Activated CD4-positive, alpha-beta T cell treated with anti-CD3 and anti-CD28 coated beads for 36 hours (primary cell): ENCODE measurements at regions of chr14 and their contacts with region 1.

Region 1: GRCh38 chr14:35883677-35884293 is 57.6 kb downstream of the BRMS1L start:
- DNase-seq: peak; percentile 56
- ATAC-seq: no peak
- H3K4me3 Mint-ChIP-seq: no peak overlapping the region
- H3K27ac Mint-ChIP-seq: no peak overlapping the region
- H3K4me1 Mint-ChIP-seq: no peaks in the 10 kb centered on the region
- H3K27me3 Mint-ChIP-seq: no peaks in the 10 kb centered on the region

Region 2: DNA sequence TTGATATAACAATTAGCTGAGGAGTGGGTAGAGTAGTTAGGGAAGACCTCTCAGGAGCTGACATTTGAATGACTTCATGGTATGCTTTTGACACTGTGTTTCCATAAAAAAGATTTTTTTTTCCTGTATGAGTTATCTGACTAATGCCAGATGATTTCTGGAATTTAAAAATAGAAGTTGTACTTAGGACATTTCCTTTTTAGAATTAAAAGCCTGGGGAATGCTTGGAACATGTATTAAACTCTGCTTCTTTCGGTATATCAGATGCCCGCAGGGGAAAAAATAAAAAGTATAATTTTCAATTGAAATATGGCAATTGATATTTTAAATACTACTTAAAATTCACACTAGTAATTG is 16.5 kb before region 1 on chr14:
- CTCF ChIA-PET with region 1: interaction called, 11 read pairs
- POLR2A ChIA-PET with region 1: no interaction called
- intact Hi-C with region 1: no loop called
- DNase-seq: no peak
- ATAC-seq: no peak
- H3K4me3 Mint-ChIP-seq: no peak overlapping the region
- H3K27ac Mint-ChIP-seq: no peak overlapping the region
- H3K4me1 Mint-ChIP-seq: no peaks in the 10 kb centered on the region
- H3K27me3 Mint-ChIP-seq: no peaks in the 10 kb centered on the region

Region 3: GRCh38 chr14:35944847-35945246 is 61.1 kb after region 1 on chr14:
- CTCF ChIA-PET with region 1: interaction called, 4 read pairs
- POLR2A ChIA-PET with region 1: no interaction called
- intact Hi-C with region 1: loop called in 1 of 2 experiments (anchors 2 kb)
- DNase-seq: peak; percentile 59
- ATAC-seq: peak; percentile 49
- H3K4me3 Mint-ChIP-seq: no peak overlapping the region
- H3K27ac Mint-ChIP-seq: no peak overlapping the region
- H3K4me1 Mint-ChIP-seq: peaks cover 2% of the 10 kb centered on the region
- H3K27me3 Mint-ChIP-seq: no peaks in the 10 kb centered on the region

Region 4: DNA sequence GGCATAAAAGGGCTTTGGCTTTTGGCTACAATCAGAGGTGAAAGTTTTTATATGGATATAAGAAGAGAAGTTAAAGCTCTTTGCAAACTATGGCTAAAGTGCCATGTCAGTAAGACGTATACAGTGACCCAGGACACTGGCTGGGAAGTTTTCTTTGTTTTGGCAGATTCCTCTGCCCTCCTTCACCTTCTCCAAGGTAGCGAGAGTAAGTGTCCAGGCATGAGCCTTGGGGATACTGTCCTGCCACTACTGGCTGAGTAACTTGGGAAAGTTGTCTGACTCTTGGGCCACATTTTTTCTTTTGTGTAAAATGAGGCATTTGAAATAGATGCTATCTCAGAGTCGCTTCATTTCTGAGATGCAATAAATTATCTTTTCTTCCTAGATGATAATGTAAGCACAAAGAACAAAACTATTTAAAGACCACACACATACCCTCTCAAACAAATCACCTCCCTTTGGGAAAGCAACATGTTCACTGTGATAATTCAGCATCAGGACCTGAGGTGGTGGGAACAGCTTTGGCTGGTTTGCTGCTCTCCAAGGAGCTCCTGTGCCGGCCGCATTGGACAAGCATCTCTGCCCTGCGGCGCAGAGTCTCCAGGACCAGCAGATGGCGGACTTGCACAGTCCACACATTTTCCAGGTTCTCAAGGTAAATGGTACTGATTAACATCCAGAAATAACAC is 186.4 kb after region 1 on chr14:
- CTCF ChIA-PET with region 1: interaction called, 41 read pairs
- POLR2A ChIA-PET with region 1: no interaction called
- intact Hi-C with region 1: loop called (anchors 1 kb)
- DNase-seq: peak; percentile 75
- ATAC-seq: peak; percentile 74
- H3K4me3 Mint-ChIP-seq: no peak overlapping the region
- H3K27ac Mint-ChIP-seq: no peak overlapping the region
- H3K4me1 Mint-ChIP-seq: no peaks in the 10 kb centered on the region
- H3K27me3 Mint-ChIP-seq: peaks cover 19% of the 10 kb centered on the region

Region 5: DNA sequence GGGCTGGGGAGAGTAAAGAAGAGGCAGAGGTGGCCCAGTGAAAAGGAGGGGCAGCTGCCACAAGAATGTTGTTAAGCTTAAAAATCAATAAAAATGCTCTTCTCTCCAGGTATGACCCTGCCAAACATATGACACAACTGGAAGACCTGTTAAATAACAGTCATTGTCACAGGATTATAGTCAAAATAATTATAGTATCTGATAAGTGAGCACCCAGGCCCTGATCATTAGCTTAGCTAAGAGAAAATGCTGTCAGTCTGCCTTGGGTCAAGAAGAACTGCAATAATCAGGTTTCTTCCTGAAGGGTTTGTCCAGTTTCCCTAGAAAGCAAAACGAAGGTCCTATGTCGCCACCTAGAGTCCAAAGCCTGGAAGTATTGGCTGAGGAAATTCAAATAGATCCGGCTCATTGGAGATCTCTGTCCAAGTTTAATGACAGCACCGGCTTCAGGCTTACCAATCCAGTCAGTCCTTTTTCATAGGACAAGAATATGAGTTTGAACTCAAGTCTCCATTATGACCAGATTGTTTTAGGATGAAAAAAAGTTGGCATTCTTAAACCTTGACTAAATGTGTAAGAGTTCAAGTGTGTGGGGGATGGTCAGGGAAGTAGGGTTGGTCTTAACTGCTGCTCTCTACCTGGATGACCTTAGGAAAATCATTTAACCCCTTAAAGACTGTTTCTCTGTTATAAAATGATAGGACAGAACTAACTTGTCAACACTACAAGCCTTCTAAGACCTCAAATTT is 721.1 kb after region 1 on chr14:
- CTCF ChIA-PET with region 1: no interaction called
- POLR2A ChIA-PET with region 1: no interaction called
- intact Hi-C with region 1: loop called in 1 of 2 experiments (anchors 2 kb)
- DNase-seq: peak; percentile 56
- ATAC-seq: peak; percentile 49
- H3K4me3 Mint-ChIP-seq: no peak overlapping the region
- H3K27ac Mint-ChIP-seq: no peak overlapping the region
- H3K4me1 Mint-ChIP-seq: no peaks in the 10 kb centered on the region
- H3K27me3 Mint-ChIP-seq: peaks cover 12% of the 10 kb centered on the region